Activated T-helper 1 cell treated with anti-CD3 and anti-CD28 coated beads, Interleukin-12 subunit alpha, Interleukin-12 subunit beta, Interleukin-2, Interleukin-4 antibody, amounts not matched to agents 30 ng/mL and 10 ng/mL and 1 ng/mL, durations not matched to agents 14 hours and 24 hours and 36 hours (primary cell): ENCODE measurements at regions of chr9 and their contacts with region 1.

Region 1: DNA sequence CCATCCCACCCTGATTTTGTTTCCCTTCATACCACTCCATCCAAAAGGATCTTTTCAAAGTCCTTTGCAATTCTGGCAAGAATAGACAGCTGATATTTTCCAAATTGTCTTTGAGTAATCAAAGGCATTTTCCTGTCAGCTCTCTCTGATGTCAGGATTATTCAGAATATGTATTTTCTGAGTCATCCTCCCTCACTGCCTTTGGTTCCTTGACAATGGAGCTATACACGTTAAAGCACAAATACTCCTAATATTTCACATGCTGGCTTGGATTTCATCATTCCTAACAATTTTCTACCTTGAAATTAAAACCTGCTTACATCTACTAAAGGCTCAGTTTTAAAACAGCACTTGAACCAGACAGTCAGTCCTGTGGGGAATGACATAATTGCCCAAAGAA is 379.4 kb downstream of the GADD45G start:
- DNase-seq: no peak
- H3K4me3 Mint-ChIP-seq: peak overlapping the region; percentile 61
- H3K27ac Mint-ChIP-seq: peak overlapping the region; percentile 93
- H3K4me1 Mint-ChIP-seq: peaks cover 67% of the 10 kb centered on the region
- H3K27me3 Mint-ChIP-seq: peaks cover 2% of the 10 kb centered on the region

Region 2: GRCh38 chr9:89743573-89744361 is 240.4 kb before region 1 on chr9:
- intact Hi-C with region 1: loop called (anchors 5 kb)
- DNase-seq: peak; percentile 75
- H3K4me3 Mint-ChIP-seq: peak overlapping the region; percentile 25
- H3K27ac Mint-ChIP-seq: peak overlapping the region; percentile 82
- H3K4me1 Mint-ChIP-seq: peaks cover 90% of the 10 kb centered on the region
- H3K27me3 Mint-ChIP-seq: no peaks in the 10 kb centered on the region

Region 3: GRCh38 chr9:89941875-89942274 is 42.3 kb before region 1 on chr9:
- intact Hi-C with region 1: no loop called
- DNase-seq: no peak
- H3K4me3 Mint-ChIP-seq: no peak overlapping the region
- H3K27ac Mint-ChIP-seq: peak overlapping the region; percentile 40
- H3K4me1 Mint-ChIP-seq: peaks cover 10% of the 10 kb centered on the region
- H3K27me3 Mint-ChIP-seq: peaks cover 5% of the 10 kb centered on the region

Region 4: DNA sequence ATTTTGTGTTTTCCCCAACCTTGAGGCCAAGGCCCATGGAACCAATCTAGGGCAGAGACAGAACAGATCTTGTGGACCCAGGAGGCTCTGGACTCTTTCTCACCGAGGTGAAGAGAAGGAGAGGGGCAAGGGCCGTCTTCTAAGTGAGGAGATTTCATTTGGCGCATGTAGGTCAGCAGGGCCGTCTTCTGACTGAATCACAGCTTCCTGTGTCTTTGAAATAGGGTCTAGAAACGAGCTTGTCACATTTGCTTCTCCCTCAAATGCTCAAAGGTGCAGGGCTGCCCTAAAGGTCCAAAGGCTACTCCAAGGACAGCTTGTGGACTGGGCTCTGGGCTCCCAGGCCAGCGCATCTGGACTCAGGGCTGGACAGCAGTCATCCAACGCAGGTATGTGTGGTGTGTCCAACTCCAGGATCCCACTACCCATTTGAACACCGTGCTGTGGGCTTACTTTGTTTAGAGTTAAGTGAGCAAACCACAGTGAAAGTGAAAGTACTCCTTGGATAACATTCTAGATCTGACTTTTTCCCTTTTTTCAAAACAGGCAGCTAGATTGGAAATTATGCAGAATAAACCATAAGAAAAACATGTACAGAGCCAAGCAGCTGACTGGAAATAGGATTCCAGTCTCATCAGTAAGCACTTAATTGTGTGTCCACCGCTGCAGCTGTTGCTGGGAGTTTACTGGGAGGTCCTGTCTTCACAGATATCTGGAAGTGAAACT is 22.4 kb before region 1 on chr9:
- intact Hi-C with region 1: loop called (anchors 1 kb)
- DNase-seq: no peak
- H3K4me3 Mint-ChIP-seq: no peak overlapping the region
- H3K27ac Mint-ChIP-seq: peak overlapping the region; percentile 41
- H3K4me1 Mint-ChIP-seq: peaks cover 15% of the 10 kb centered on the region
- H3K27me3 Mint-ChIP-seq: peaks cover 6% of the 10 kb centered on the region

Region 5: GRCh38 chr9:89999534-90000370 is 15.5 kb after region 1 on chr9:
- intact Hi-C with region 1: loop called (anchors 1 kb)
- DNase-seq: peak; percentile 68
- H3K4me3 Mint-ChIP-seq: peak overlapping the region; percentile 69
- H3K27ac Mint-ChIP-seq: peak overlapping the region; percentile 75
- H3K4me1 Mint-ChIP-seq: peaks cover 35% of the 10 kb centered on the region
- H3K27me3 Mint-ChIP-seq: no peaks in the 10 kb centered on the region

Region 6: GRCh38 chr9:91711755-91712601 is 1727.8 kb after region 1 on chr9:
- intact Hi-C with region 1: loop called (anchors 5 kb)
- DNase-seq: peak; percentile 67
- H3K4me3 Mint-ChIP-seq: no peak overlapping the region
- H3K27ac Mint-ChIP-seq: no peak overlapping the region
- H3K4me1 Mint-ChIP-seq: no peaks in the 10 kb centered on the region
- H3K27me3 Mint-ChIP-seq: peaks cover 9% of the 10 kb centered on the region